ENCODE measurements at regions of chr1 and their contacts with region 1.

Region 1: GRCh38 chr1:12407050-12407961 is 177.5 kb downstream of the VPS13D start:
- DNase-seq: peak in 1 of 2 donors; percentile 36
- H3K4me3 ChIP-seq: no peak overlapping the region
- H3K27ac ChIP-seq: peak overlapping the region; percentile 70 to 77
- H3K4me1 ChIP-seq: peaks cover 5 to 15% of the 10 kb centered on the region in 2 donors
- H3K27me3 ChIP-seq: no peaks in the 10 kb centered on the region
- CTCF ChIP-seq: peak; percentile 43 to 57 (median 48)
- POLR2A ChIP-seq: no peak

Region 2: GRCh38 chr1:12477936-12478611 is 70.8 kb after region 1 on chr1:
- intact Hi-C with region 1: loop called (anchors 2 kb)
- DNase-seq: peak; percentile 79 to 89
- H3K4me3 ChIP-seq: no peak overlapping the region
- H3K27ac ChIP-seq: peak overlapping the region; percentile 76 to 80
- H3K4me1 ChIP-seq: peaks cover 21 to 35% of the 10 kb centered on the region in 2 donors
- H3K27me3 ChIP-seq: no peaks in the 10 kb centered on the region
- CTCF ChIP-seq: no peak
- POLR2A ChIP-seq: no peak

Region 3: DNA sequence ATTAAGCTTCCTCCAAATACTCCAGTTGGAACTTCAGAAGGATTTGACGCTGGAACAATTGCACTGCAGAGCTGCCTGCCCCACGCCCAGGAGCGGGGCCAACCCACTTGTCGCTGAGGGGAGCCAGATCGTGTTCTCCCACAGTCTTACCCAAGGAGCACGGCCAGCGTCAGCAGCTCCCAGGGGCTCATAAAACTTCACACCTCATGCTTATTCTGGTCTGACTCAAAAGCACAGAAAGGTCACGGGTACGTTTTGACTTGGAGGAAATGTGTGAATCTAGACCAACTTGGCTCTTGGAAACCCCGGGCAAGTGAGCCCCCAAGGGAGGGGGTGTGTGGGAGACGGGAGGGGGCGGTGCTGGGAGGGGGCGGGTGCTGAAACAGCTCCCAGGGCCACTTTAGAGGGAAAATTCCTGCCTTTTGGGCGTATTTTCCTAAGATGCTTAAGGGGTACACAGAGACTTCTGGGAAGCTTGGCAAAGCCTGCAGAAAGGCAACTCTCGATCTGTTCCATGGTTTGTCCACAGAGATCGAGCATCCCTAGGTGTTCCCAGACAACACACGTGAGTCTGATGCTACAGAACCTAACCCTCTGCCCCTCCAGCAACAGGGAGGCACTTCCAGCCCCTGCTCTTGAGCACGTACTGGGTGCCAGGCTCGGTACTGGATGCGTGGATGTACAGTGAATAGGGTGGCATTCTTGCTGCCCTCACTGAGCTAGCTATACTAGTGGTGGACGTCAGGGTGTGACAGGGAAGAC is 111.8 kb after region 1 on chr1:
- intact Hi-C with region 1: no loop called
- DNase-seq: peak; percentile 81 to 84
- H3K4me3 ChIP-seq: no peak overlapping the region
- H3K27ac ChIP-seq: peak overlapping the region; percentile 29 to 44
- H3K4me1 ChIP-seq: peaks cover 0 to 5% of the 10 kb centered on the region in 2 donors
- H3K27me3 ChIP-seq: no peaks in the 10 kb centered on the region
- CTCF ChIP-seq: no peak
- POLR2A ChIP-seq: no peak

Region 4: DNA sequence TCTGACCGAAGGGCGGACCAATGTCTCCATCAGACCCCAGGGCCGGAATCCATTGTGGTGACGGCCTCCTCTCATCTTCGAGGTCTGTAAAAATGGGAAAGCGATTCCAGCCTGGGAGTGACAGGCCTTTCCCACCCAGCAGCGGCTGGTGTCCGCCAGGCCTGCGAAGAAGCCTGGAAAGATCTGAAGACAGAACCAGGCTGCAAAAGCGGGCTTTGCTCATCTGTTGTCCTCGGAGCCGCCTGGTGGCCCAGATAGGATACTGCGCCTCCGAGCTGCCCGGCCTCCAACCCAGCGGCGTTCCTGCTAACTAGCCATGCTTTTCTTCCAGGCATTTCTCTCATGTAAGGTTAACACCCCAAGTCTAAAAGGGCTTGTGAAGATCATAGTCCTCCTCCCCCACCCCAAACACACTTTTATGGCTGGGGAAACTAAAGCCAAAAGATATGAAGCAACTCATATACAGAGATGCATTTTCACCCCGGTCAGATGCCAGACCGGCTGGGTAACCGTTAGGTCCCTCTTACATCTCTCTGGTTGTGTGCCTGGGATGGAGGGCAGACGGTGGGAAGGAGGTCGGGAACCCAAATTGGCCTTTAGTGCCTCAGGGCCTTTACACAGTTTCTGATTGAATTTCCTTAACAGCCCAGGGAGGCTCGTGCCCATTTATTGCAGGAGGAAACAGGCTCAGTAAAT is 212.6 kb after region 1 on chr1:
- intact Hi-C with region 1: loop called (anchors 5 kb)
- DNase-seq: peak; percentile 90
- H3K4me3 ChIP-seq: no peak overlapping the region
- H3K27ac ChIP-seq: peak overlapping the region; percentile 93 to 94
- H3K4me1 ChIP-seq: peaks cover 0 to 12% of the 10 kb centered on the region in 2 donors
- H3K27me3 ChIP-seq: no peaks in the 10 kb centered on the region
- CTCF ChIP-seq: peak; percentile 94 to 97 (median 94)
- POLR2A ChIP-seq: peak in 1 of 2 donors; percentile 16